Activated CD8-positive, alpha-beta T cell treated with anti-CD3 and anti-CD28 coated beads, Interleukin-2, amount 10 ng/mL, durations not matched to agents 7 days and 5 days (primary cell): ENCODE measurements at regions of chr5 and their contacts with region 1.

Region 1: DNA sequence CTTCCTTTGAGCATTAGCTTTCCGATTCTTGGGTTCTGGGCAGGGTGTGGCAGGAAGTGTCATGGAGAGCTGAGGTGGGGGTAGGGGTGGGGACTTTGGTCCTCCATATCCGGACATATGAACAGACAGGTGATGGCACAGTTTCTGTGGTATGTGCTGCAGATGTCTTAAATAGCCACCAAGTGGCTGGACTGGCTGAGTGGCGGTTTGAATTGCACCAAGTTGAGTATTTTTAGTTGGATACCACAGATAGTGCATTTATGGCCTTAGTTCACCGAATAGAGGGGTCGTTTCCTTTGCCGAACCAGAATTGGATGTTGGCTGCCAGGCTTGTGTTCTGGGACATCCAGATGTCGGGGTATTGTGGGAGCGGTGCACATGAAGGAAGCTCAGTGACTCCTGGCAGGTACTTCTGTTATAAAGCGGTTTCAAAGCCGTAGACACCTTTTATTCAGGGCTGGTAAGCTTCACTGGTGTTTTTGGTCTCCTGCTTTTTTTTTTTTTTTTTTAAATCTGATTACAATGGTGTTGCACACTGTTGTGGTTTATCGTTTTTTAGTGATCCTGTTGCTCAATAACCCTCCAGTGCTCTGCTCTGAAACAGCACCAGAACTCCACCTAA is 15.1 kb upstream of the TNFAIP8 start:
- DNase-seq: peak; percentile 89
- ATAC-seq: peak; percentile 68
- H3K4me3 Mint-ChIP-seq: peak overlapping the region; percentile 78
- H3K27ac Mint-ChIP-seq: peak overlapping the region; percentile 95
- H3K4me1 Mint-ChIP-seq: peaks cover 96% of the 10 kb centered on the region
- H3K27me3 Mint-ChIP-seq: no peaks in the 10 kb centered on the region

Region 2: DNA sequence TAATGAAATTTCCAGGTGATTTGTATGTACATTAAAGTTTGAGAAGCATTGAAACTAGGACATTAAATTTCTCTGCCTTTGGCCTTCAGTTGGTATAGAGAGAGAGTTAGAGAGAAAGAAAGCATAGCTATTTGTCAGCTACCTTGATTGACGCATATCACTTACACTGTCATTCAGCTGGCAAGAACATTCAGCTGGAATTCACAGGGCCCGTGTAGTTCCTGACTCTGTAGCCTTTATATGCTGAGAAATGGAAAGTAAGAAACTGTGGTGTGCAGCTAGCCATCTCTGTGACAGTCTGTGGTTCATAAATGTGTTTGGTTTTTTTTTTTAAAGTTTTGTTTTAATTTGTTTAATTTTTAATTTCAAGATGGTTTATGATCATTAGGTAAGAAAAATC is 210.9 kb before region 1 on chr5:
- CTCF ChIA-PET with region 1: no interaction called
- POLR2A ChIA-PET with region 1: no interaction called
- DNase-seq: no peak
- ATAC-seq: no peak
- H3K4me3 Mint-ChIP-seq: no peak overlapping the region
- H3K27ac Mint-ChIP-seq: no peak overlapping the region
- H3K4me1 Mint-ChIP-seq: no peaks in the 10 kb centered on the region
- H3K27me3 Mint-ChIP-seq: no peaks in the 10 kb centered on the region

Region 3: GRCh38 chr5:119267958-119268386 is 72.7 kb before region 1 on chr5:
- CTCF ChIA-PET with region 1: interaction called, 12 read pairs
- POLR2A ChIA-PET with region 1: interaction called, 13 read pairs
- DNase-seq: peak; percentile 94
- ATAC-seq: peak; percentile 70
- H3K4me3 Mint-ChIP-seq: peak overlapping the region; percentile 98
- H3K27ac Mint-ChIP-seq: peak overlapping the region; percentile 96
- H3K4me1 Mint-ChIP-seq: peaks cover 56% of the 10 kb centered on the region
- H3K27me3 Mint-ChIP-seq: no peaks in the 10 kb centered on the region

Region 4: DNA sequence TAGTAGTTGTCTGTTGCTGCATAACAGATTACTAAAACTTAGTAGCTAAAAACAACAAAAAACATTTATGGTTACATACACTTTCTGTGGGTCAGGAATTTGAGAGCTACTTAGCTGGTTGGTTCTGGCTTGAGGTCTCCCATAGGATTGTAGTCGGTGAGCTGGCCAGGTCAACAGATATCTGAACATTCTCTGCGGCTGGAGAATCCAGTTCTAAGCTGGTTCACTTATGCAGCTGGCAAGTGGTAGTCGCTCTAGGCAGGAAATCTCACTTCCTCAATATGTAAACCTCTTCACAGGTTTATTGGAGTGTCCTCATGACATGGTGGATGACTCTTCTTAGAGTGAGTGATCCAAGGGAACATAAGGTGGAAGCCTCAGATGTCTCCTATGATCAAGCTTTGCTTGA is 50.5 kb before region 1 on chr5:
- CTCF ChIA-PET with region 1: interaction called, 9 read pairs
- POLR2A ChIA-PET with region 1: interaction called, 12 read pairs
- DNase-seq: no peak
- ATAC-seq: peak; percentile 34
- H3K4me3 Mint-ChIP-seq: peak overlapping the region; percentile 48
- H3K27ac Mint-ChIP-seq: peak overlapping the region; percentile 94
- H3K4me1 Mint-ChIP-seq: peaks cover 90% of the 10 kb centered on the region
- H3K27me3 Mint-ChIP-seq: no peaks in the 10 kb centered on the region

Region 5: DNA sequence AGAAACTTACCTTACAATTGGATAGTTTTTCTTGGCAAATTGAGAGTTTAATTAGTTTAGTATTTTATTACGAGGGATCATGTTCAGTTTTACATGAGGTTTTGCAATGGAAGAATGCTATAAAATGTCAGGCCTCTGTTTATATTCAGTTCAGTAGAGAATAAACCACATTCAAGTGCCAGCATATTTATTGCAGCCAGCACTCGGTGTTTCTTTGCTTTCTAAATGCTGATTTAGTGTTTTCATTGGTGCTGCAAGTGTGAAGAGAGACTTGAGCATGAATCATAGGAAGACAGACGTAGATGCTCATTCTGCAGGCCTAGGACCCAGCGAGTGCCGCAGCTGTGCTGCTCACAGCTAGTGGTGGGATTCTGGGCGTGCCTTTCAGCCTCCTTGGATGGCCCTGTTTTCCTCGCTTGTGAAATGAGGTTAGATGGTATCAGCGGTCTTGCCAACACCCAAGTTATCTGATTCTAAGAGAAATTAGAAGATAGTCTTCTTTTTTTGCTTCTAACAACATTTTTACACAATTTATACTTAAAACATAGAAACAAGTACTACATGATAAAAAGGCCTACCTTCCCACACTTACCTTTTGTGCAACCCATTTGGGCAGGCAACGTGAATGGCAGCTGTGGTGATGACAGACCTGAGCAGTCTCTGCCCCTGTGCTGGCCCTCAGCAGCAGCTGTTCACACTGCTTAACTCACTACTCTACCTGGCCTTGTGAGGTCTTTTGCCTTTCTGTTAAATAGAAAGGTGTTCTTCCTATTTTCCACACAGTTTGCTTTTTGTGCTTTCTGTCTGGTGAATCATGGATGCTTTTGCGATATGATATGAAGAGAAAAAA is 11.7 kb before region 1 on chr5:
- CTCF ChIA-PET with region 1: interaction called, 30 read pairs
- POLR2A ChIA-PET with region 1: interaction called, 29 read pairs
- DNase-seq: peak; percentile 72
- ATAC-seq: peak; percentile 62
- H3K4me3 Mint-ChIP-seq: peak overlapping the region; percentile 45
- H3K27ac Mint-ChIP-seq: peak overlapping the region; percentile 95
- H3K4me1 Mint-ChIP-seq: peaks cover 82% of the 10 kb centered on the region
- H3K27me3 Mint-ChIP-seq: no peaks in the 10 kb centered on the region

Region 6: DNA sequence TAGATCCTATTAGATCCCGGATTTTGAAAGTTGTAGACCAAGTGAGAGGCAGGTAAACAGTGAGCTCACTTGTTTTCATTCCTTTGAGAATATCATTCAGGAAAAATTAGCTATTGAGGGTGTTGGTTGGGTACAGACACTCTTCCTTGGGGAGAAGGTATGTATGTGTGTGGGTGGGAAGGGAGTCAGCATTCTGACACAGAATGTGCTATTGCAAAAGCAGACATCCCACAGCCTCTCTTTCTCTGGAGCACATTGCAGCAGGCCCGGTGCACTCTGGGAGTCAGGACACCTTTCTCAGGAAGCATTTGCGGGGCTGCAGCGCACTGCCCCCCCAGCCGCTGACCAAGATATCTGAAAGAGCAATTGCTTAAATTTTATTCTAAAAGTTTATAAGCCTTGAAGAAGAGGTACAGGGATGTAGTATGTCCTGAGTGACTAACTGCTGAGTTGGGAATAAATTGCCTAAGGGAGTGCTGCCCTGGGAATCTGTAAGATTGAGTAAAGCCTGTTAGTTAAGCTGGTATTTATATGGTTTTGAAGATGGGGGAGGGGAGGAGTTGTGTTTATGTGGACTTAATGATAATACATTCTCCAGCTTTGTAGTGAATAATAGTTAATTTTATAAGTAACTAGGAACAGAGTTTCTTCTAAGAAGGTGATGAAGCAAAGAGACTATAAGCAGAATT is 20.3 kb after region 1 on chr5:
- CTCF ChIA-PET with region 1: interaction called, 28 read pairs
- POLR2A ChIA-PET with region 1: interaction called, 280 read pairs
- DNase-seq: no peak
- ATAC-seq: no peak
- H3K4me3 Mint-ChIP-seq: no peak overlapping the region
- H3K27ac Mint-ChIP-seq: peak overlapping the region; percentile 13
- H3K4me1 Mint-ChIP-seq: peaks cover 96% of the 10 kb centered on the region
- H3K27me3 Mint-ChIP-seq: no peaks in the 10 kb centered on the region

Region 7: GRCh38 chr5:119378075-119378700 is 37.5 kb after region 1 on chr5:
- CTCF ChIA-PET with region 1: interaction called, 14 read pairs
- POLR2A ChIA-PET with region 1: interaction called, 4 read pairs
- DNase-seq: no peak
- ATAC-seq: peak; percentile 58
- H3K4me3 Mint-ChIP-seq: peak overlapping the region; percentile 34
- H3K27ac Mint-ChIP-seq: peak overlapping the region; percentile 73
- H3K4me1 Mint-ChIP-seq: peaks cover 64% of the 10 kb centered on the region
- H3K27me3 Mint-ChIP-seq: no peaks in the 10 kb centered on the region